ENCODE measurements at regions of chr12 and their contacts with region 1.

Region 1: GRCh38 chr12:51118706-51119105 is 35.3 kb upstream of the CSRNP2 start:
- DNase-seq: peak; percentile 87
- ATAC-seq: peak; percentile 89
- H3K4me3 ChIP-seq: no peak overlapping the region
- H3K27ac ChIP-seq: no peak overlapping the region
- H3K4me1 ChIP-seq: peaks cover 5% of the 10 kb centered on the region
- H3K27me3 ChIP-seq: no peaks in the 10 kb centered on the region
- CTCF ChIP-seq: no peak

Region 2: DNA sequence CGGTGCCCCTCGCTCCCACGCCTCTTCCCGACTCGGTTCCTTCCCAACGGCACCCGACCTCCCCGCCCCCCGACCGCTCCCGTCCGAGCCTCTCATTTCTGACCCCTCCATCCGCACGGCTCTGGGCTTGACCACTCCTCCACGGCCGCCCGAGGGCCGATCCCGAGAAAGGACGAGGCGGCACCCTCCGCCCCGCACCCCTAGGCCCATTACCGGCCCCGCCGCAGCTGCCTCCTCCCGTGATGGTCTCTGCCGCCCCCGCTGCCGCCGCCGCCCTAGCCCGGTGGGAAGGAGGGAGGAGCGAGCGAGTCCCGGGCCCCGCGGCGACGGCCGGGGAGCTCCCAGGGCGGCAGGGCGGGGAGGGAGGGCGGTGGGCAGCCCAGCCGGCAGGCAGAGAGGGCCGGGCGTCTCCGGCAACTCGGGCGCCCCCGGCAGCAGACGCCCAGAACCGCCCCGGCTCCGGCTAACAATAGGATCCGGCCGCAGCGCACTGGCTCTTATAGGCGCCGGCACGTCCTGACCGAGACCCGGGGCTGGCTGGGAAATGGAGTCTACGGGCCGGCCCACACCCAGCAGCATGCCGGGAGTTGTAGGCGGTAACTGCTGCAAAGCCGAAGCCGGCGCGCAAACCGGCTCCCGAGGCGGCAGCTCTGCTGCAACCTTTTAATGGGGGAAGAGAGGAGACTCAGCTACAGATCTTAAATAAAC is 35.4 kb before region 1 on chr12 and contains the start of gene CSRNP2:
- CTCF ChIA-PET with region 1: no interaction called
- POLR2A ChIA-PET with region 1: no interaction called
- intact Hi-C with region 1: no loop called
- DNase-seq: peak; percentile 94
- ATAC-seq: peak; percentile 99
- H3K4me3 ChIP-seq: peak within 1 kb of the TSS; percentile 92
- H3K27ac ChIP-seq: no peak within 1 kb of the TSS
- H3K4me1 ChIP-seq: peaks cover 12% of the 10 kb centered on the region
- H3K27me3 ChIP-seq: no peaks in the 10 kb centered on the region
- CTCF ChIP-seq: no peak
- total RNA-seq, gene CSRNP2: 18.9 and 23.3 TPM in 2 replicates

Region 3: DNA sequence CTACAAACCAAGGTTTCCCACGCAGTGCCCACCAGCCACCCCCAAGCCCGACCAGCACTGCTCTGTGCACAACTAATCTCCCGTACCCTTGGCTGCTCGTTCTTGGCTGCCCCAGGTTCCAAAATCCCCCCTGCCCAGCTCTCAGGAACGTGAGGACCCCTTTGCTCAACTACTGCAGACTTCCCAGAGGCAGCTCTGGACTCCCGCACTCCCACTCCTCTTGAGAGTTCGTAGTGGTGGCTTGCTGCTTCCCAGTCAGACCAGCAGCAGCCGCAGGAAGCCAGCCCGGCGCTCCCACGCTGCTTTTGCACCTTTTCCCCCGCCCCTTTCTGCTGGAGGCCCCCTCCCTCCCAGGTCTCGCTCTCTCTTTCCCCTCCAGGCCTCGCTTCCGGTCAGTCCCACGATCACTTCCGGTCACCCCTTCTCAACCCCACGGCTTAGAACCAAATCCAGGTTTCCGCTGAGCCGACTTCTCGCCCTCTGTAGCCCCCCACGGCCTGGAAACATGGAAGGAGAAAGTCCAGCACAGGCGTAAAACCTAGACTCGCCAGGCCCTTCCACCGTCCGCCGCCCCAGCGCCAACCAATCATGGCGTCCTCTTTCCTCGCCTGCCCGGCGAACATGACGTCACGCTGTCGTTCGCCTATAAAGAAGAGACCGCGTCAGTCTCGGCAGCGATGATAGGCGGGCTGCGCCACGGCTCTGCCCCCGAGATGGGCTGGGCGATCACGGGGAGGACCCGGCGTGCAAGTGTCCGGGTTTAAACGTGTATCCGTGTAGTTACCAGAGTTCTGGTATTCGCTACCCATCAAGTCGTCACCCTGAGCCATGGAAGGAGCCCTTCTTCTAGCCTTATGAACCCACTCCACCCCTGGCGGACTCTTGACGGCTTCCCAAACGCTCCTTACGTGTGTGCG is 54.1 kb after region 1 on chr12 and contains the start of gene TFCP2:
- CTCF ChIA-PET with region 1: no interaction called
- POLR2A ChIA-PET with region 1: no interaction called
- intact Hi-C with region 1: loop called (anchors 10 kb)
- DNase-seq: peak; percentile 69
- ATAC-seq: peak; percentile 90
- H3K4me3 ChIP-seq: peak within 1 kb of the TSS; percentile 80
- H3K27ac ChIP-seq: peak within 1 kb of the TSS; percentile 84
- H3K4me1 ChIP-seq: no peaks in the 10 kb centered on the region
- H3K27me3 ChIP-seq: no peaks in the 10 kb centered on the region
- CTCF ChIP-seq: no peak
- total RNA-seq, gene TFCP2: 23.2 and 27.3 TPM in 2 replicates